Gastrocnemius medialis (tissue), 4 donors: ENCODE measurements at regions of chr11 and their contacts with region 1.

Region 1: DNA sequence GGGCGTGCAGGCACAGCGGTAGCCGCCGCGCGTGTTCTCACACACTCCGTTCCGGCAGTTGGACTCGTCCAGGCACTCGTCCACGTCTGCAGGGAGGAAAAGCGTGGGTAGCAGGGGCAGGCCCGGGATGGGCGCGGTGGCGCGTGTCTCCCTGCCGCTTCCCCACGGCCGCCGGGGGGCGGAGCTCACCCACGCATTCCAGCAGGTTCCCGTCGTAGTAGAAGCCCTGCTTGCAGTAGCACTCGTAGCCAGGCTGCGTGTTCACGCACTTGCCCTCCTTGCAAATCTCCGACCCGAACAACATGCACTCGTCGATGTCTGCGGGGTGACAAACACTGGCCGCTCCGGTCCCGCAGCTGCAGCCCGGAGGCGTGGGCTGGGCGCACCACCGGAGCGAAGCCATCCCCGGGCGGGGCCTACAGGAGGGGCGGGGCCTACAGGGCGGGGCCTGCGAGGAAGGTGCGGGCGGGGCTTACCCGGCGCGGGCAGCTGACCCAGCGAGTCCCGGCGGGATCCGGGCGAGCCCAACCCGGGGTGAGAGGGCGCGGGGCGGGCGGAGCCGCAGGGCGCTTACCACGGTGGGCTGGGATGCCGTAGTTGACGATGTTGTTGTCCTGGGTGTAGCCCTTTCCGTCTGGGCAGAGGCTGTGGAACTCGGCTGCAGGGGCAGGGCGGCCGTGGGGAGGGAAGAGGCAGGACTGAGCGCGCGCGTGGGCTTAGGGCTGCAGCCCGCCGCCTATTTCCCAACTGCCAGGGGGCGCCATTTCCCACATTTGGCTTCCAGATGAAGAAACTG is 15.6 kb downstream of the SCYL1 start:
- DNase-seq: peak; percentile 75 to 90
- ATAC-seq: peak; percentile 88
- H3K4me3 ChIP-seq: peak overlapping the region; percentile 60 to 76 (median 64)
- H3K27ac ChIP-seq: peak overlapping the region; percentile 86 to 92 (median 90)
- H3K4me1 ChIP-seq: peaks cover 7 to 16% of the 10 kb centered on the region in 2 donors
- H3K27me3 ChIP-seq: no peaks in the 10 kb centered on the region
- CTCF ChIP-seq: peak; percentile 82 to 96 (median 92)
- POLR2A ChIP-seq: peak; percentile 52 to 67

Region 2: DNA sequence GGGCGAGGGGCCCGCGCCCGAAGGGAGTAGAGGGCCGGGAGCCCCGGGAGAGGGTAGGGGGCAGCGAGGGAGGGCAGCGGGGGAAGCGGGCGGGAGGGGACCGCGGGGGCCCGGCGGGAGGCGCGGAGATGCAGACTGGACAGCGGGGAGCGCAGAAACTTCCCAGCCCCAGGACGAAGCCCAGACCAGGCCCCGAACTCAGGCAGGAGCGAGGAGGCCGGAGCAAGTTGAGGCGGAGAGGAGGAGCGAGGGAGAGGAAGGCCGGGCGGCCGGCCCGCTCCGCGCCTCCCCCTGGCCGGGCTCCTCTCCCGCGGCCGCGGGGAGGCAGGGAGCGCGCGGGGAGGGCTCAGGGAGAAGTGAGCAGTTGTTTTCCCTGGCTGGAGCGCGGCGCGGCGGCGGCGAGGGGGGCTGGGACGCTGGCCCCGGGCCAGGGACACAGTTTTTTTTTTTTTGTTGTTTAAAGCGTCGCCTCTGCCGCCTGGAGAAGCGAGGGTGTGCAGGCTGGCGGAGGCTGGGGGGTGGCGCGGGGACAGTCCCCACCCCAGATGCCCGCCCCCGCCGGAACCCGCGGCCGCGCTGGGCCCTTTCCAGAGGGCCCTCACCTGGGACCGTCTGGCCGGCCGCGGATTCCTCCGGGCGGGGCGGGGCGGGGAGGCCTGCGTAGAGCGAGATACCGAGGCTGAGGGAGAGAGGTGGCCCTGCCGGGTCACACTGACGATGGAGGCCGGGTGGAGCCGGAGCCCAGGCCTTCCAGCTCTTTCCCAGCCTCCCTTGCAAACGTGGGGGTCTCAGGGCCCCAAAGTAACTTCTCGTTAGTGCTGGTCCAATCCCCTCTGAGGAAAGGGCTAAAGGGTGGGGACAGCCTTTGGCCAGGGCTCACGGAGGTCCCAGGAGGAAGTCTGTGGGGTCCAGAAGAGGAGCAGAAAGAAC is 17.8 kb after region 1 on chr11 and contains the start of gene LTBP3:
- in situ Hi-C with region 1: no loop called
- intact Hi-C with region 1: loop called (anchors 1 kb)
- DNase-seq: peak; percentile 67 to 86
- ATAC-seq: peak; percentile 67 to 73
- H3K4me3 ChIP-seq: peak within 1 kb of the TSS; percentile 55 to 70 (median 63)
- H3K27ac ChIP-seq: peak within 1 kb of the TSS; percentile 95 to 99 (median 97)
- H3K4me1 ChIP-seq: peaks cover 61 to 62% of the 10 kb centered on the region in 2 donors
- H3K27me3 ChIP-seq: no peaks in the 10 kb centered on the region
- CTCF ChIP-seq: peak in 3 of 5 experiments; percentile 18 to 27 (median 24)
- POLR2A ChIP-seq: peak; percentile 52 to 54
- total RNA-seq, gene LTBP3: 18.5 to 56.6 (median 35.6) TPM

Region 3: GRCh38 chr11:65588199-65589054 is 47.9 kb after region 1 on chr11:
- in situ Hi-C with region 1: no loop called
- intact Hi-C with region 1: loop called (anchors 1 kb)
- DNase-seq: peak; percentile 80 to 92
- ATAC-seq: peak; percentile 69 to 80
- H3K4me3 ChIP-seq: peak overlapping the region in 3 of 4 donors; percentile 23 to 34 (median 26)
- H3K27ac ChIP-seq: peak overlapping the region; percentile 91 to 99 (median 98)
- H3K4me1 ChIP-seq: peaks cover 65 to 72% of the 10 kb centered on the region in 2 donors
- H3K27me3 ChIP-seq: no peaks in the 10 kb centered on the region
- CTCF ChIP-seq: peak; percentile 55 to 84 (median 70)
- POLR2A ChIP-seq: peak; percentile 18 to 29

Region 4: GRCh38 chr11:65593518-65594298 is 53.2 kb after region 1 on chr11:
- in situ Hi-C with region 1: no loop called
- intact Hi-C with region 1: loop called (anchors 1 kb)
- DNase-seq: peak; percentile 53 to 84
- ATAC-seq: peak; percentile 69
- H3K4me3 ChIP-seq: no peak overlapping the region
- H3K27ac ChIP-seq: peak overlapping the region; percentile 91 to 99 (median 98)
- H3K4me1 ChIP-seq: peaks cover 38 to 53% of the 10 kb centered on the region in 2 donors
- H3K27me3 ChIP-seq: no peaks in the 10 kb centered on the region
- CTCF ChIP-seq: peak; percentile 85 to 93 (median 92)
- POLR2A ChIP-seq: peak in 1 of 2 donors; percentile 11